ENCODE measurements at regions of chr19 and their contacts with region 1.

Region 1: DNA sequence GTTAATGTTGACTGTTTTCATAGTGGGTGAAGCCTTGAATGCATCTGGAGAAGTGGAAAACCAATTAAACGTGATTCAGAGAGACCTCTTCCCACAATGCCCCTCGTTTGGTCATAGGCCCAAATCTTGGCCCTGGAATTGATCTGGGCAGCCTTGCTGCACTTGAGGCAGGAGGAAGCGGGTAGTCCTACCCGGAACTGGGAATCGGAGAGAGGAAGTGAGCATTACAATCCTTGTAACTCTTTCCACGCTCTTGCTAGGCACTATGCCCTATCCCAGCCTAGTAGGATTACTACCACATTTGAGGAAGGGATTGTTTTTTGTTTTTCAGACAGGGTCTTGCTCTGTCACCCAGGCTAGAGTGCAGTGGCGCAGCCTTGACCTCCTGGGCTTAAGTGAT is 3.6 kb downstream of the KCNK6 start:
- DNase-seq: no peak
- ATAC-seq: no peak
- H3K4me3 ChIP-seq: no peak overlapping the region
- H3K4me3 Mint-ChIP-seq: no peak overlapping the region
- H3K27ac ChIP-seq: no peak overlapping the region
- H3K27ac Mint-ChIP-seq: no peak overlapping the region
- H3K4me1 ChIP-seq: peaks cover 8 to 23% of the 10 kb centered on the region in 2 donors
- H3K4me1 Mint-ChIP-seq: peaks cover 21% of the 10 kb centered on the region
- H3K27me3 ChIP-seq: peaks cover 0 to 2% (median 0%) of the 10 kb centered on the region in 4 experiments
- H3K27me3 Mint-ChIP-seq: no peaks in the 10 kb centered on the region
- CTCF ChIP-seq: no peak

Region 2: DNA sequence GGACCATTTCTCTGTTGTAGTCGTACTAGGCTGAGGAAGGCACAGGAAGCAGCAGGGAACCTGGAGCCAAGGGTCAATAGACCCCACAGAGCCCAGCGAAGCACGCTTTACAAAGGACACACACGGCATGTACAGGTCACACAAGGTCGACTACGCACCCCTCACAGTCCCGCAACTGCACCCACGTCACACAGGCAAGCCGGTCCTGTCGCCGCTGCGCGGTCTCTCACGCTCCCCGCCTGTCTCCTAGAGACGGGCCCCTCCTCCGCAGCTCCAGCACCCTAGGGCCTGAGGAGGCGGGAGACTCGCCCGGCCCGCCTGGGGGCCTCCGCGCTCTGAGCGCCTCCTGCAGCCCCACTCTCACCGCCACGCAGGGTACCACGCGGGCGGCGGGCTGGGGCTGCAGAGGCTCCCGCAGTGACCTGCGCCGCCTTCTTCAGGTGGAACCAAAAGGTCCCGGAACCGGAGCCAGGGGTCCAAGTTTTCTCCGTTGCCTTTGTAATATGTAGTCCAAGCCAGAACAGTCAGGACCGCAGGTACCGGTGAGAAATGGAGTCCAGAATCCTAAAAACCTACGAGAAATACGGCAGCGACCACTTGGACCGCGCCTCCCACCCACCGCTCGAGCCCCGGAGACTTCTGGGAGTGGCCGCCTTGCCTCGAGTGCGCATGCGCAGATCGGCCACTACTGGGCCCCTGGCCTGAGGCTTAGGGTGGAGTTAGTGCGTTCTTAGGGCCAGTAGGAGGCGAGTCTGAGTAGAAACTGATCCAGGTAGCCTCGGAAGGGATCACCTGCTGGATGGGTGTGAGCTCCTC is 604.0 kb before region 1 on chr19 and contains the start of gene ZNF607:
- CTCF ChIA-PET with region 1: no interaction called
- POLR2A ChIA-PET with region 1: no interaction called
- intact Hi-C with region 1: no loop called
- DNase-seq: peak; percentile 94
- ATAC-seq: peak; percentile 95
- H3K4me3 ChIP-seq: peak within 1 kb of the TSS; percentile 51 to 86 (median 82)
- H3K4me3 Mint-ChIP-seq: peak within 1 kb of the TSS; percentile 90
- H3K27ac ChIP-seq: peak within 1 kb of the TSS; percentile 62 to 68
- H3K27ac Mint-ChIP-seq: peak within 1 kb of the TSS; percentile 89
- H3K4me1 ChIP-seq: peaks cover 7 to 12% of the 10 kb centered on the region in 2 donors
- H3K4me1 Mint-ChIP-seq: peaks cover 14% of the 10 kb centered on the region
- H3K27me3 ChIP-seq: no peaks in the 10 kb centered on the region
- H3K27me3 Mint-ChIP-seq: no peaks in the 10 kb centered on the region
- CTCF ChIP-seq: peak; percentile 52
- total RNA-seq, gene ZNF607: 19.4 and 21.5 TPM in 2 replicates

Region 3: DNA sequence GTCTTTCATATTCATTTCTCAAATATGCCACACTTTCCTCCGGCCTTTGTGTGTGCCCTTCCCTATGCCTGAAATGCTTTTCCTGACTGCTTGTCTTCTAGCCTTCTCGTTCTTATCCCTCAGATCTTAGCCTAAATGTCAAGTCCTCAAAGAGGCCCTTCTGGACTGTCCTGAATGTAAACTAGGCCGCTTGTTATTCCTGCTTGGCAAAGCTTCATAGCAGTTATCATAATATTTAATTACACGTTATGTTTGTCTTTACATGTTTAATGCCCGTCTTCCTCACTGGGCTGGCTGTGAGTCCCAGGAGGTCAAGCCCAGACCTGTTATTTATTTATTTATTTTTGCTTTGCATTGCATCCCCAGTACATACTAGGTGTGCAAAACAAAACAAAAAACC is 353.6 kb before region 1 on chr19:
- CTCF ChIA-PET with region 1: no interaction called
- POLR2A ChIA-PET with region 1: interaction called, 11 read pairs
- intact Hi-C with region 1: no loop called
- DNase-seq: no peak
- ATAC-seq: no peak
- H3K4me3 ChIP-seq: no peak overlapping the region
- H3K4me3 Mint-ChIP-seq: no peak overlapping the region
- H3K27ac ChIP-seq: peak overlapping the region in 1 of 2 donors; percentile 17
- H3K27ac Mint-ChIP-seq: peak overlapping the region; percentile 64
- H3K4me1 ChIP-seq: peaks cover 41 to 53% of the 10 kb centered on the region in 2 donors
- H3K4me1 Mint-ChIP-seq: peaks cover 60% of the 10 kb centered on the region
- H3K27me3 ChIP-seq: no peaks in the 10 kb centered on the region
- H3K27me3 Mint-ChIP-seq: no peaks in the 10 kb centered on the region
- CTCF ChIP-seq: no peak

Measured in B cell (primary cell).